Common myeloid progenitor, CD34-positive (primary cell): ENCODE measurements at regions of chr19 and their contacts with region 1.

Region 1: DNA sequence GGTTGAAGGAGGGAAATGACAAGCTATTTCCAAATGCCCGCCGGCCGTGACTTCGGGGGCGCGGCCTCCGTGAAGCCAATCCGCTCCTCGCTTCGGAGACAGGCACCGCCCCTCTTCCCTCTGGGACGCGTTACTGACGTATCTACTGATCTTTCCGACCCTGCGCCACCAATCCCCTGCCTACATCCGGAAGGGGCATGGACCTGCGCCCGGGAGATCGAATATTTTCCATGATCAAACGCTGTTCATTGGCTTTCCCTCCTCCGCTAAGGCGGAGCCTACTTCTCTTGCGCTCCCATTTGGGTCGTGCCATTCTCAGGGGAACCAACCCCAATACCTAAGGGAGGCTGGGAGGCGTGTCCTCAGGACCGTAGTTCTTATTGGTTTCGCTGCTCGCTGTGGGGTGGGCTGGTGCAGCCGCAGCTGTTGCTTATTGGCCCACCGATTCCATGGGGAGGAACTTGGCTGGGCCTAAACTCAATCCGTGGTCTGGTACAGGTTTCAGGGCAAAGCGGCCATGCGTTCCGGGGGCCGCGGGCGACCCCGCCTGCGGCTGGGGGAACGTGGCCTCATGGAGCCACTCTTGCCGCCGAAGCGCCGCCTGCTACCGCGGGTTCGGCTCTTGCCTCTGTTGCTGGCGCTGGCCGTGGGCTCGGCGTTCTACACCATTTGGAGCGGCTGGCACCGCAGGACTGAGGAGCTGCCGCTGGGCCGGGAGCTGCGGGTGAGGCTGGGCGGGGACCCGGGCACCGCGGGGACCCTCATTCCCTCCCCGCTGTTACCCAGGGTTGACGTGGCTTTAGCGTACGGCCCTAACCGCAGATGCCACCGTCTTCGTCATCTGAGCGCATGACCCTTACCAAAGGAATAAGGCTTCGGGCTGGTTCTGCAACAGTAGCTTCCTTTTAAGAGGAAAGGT is at the start of gene QPCTL:
- DNase-seq: peak; percentile 100
- H3K4me3 ChIP-seq: peak within 1 kb of the TSS; percentile 86 to 93 (median 89)
- H3K27ac ChIP-seq: peak within 1 kb of the TSS; percentile 90 to 94
- H3K4me1 ChIP-seq: peaks cover 0 to 20% (median 18%) of the 10 kb centered on the region in 4 experiments
- H3K27me3 ChIP-seq: no peaks in the 10 kb centered on the region

Region 2: DNA sequence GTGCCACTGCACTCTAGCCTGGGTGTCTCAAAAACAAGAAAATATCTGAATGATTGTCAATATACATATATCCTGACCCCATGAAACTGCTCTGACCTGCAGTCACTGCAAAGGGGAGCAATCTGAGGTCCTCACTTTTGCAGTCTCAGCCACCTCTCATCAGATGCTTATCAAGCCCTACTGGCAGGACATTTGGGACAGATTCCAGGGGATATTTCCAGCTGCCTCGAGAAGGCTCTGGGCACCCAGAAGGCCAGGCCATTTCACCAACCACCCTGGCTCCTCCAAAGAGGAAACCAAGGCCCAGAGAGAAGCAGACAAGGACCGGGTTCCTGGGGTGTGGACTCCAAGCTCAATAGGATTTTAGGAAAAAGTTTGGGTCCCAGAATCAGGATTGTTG is 55.5 kb before region 1 on chr19:
- CTCF ChIA-PET with region 1: no interaction called
- POLR2A ChIA-PET with region 1: no interaction called
- DNase-seq: no peak
- H3K4me3 ChIP-seq: no peak overlapping the region
- H3K27ac ChIP-seq: no peak overlapping the region
- H3K4me1 ChIP-seq: peaks cover 0 to 28% (median 24%) of the 10 kb centered on the region in 4 experiments
- H3K27me3 ChIP-seq: no peaks in the 10 kb centered on the region

Region 3: GRCh38 chr19:45681391-45682015 is 10.9 kb before region 1 on chr19:
- CTCF ChIA-PET with region 1: interaction called, 46 read pairs
- POLR2A ChIA-PET with region 1: interaction called, 5 read pairs
- DNase-seq: peak; percentile 79 to 86 (median 84)
- H3K4me3 ChIP-seq: peak overlapping the region in 6 of 7 experiments; percentile 35 to 76 (median 53)
- H3K27ac ChIP-seq: no peak overlapping the region
- H3K4me1 ChIP-seq: peaks cover 0 to 23% (median 21%) of the 10 kb centered on the region in 4 experiments
- H3K27me3 ChIP-seq: peaks cover 0 to 29% (median 16%) of the 10 kb centered on the region in 5 experiments

Region 4: GRCh38 chr19:45705115-45705514 is 12.7 kb after region 1 on chr19:
- CTCF ChIA-PET with region 1: interaction called, 29 read pairs
- POLR2A ChIA-PET with region 1: no interaction called
- DNase-seq: no peak
- H3K4me3 ChIP-seq: no peak overlapping the region
- H3K27ac ChIP-seq: no peak overlapping the region
- H3K4me1 ChIP-seq: peaks cover 0 to 5% (median 1%) of the 10 kb centered on the region in 4 experiments
- H3K27me3 ChIP-seq: no peaks in the 10 kb centered on the region

Region 5: GRCh38 chr19:45711851-45712698 is 19.6 kb after region 1 on chr19:
- CTCF ChIA-PET with region 1: interaction called, 13 read pairs
- POLR2A ChIA-PET with region 1: interaction called, 9 read pairs
- DNase-seq: no peak
- H3K4me3 ChIP-seq: no peak overlapping the region
- H3K27ac ChIP-seq: no peak overlapping the region
- H3K4me1 ChIP-seq: peaks cover 0 to 12% (median 8%) of the 10 kb centered on the region in 4 experiments
- H3K27me3 ChIP-seq: no peaks in the 10 kb centered on the region

Region 6: DNA sequence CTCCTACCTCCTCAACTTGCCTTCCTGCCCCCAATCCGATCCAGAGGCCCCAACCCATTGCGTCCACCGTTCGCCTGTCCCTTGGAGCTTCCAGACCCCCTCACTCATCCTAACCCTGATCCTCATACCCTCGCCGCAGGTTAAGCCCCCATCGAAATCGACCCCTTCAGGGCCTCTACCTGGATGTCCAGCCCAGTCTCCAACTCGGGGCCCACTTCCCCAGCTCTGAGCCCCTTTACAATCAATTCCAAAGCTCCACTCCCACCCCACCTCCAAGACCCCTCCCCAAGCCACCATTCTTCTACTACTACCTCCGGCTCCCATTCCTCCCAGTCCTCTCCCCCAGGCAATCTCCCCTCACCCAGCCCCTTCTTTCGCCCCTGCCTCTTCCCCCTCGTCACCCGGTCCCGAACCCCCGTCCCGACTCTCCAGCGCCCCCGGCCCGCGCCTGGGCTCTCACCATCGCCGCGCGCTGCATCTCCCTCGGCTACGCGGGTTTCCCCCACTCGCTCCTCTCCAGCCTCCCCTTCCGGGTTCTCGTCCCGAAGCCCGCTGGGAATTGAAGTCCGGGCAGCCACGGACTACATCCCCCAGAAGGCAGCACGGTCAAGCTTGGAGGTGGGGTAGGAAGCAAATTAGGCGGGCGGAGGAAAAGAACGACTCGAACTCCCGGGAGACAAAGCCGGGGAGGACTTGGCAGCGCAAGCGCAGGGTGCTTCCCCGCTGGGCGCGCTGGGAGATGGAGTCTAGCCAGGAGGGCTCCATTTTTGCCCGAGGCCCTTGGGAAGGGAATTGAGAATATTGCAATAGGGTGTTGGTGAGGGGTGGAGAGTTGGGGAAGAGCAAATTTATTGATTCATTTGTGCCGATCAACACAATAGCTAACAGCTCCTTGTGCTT is 38.2 kb after region 1 on chr19 and contains the start of gene FBXO46:
- CTCF ChIA-PET with region 1: interaction called, 11 read pairs
- POLR2A ChIA-PET with region 1: interaction called, 10 read pairs
- DNase-seq: peak; percentile 96 to 98 (median 98)
- H3K4me3 ChIP-seq: peak within 1 kb of the TSS; percentile 56 to 93 (median 85)
- H3K27ac ChIP-seq: peak within 1 kb of the TSS; percentile 74 to 87
- H3K4me1 ChIP-seq: peaks cover 2 to 12% (median 9%) of the 10 kb centered on the region in 4 experiments
- H3K27me3 ChIP-seq: no peaks in the 10 kb centered on the region